CD4-positive, alpha-beta memory T cell (primary cell): ENCODE measurements at regions of chr21 and their contacts with region 1.

Region 1: GRCh38 chr21:34351786-34352241 is 12.0 kb upstream of the KCNE2 start:
- DNase-seq: peak in 2 of 5 donors; percentile 2 to 15
- H3K4me3 ChIP-seq: no peak overlapping the region
- H3K4me3 Mint-ChIP-seq: no peak overlapping the region
- H3K27ac ChIP-seq: no peak overlapping the region
- H3K27ac Mint-ChIP-seq: no peak overlapping the region
- H3K4me1 ChIP-seq: no peaks in the 10 kb centered on the region
- H3K4me1 Mint-ChIP-seq: peaks cover 4 to 6% (median 5%) of the 10 kb centered on the region in 4 donors
- H3K27me3 ChIP-seq: no peaks in the 10 kb centered on the region
- H3K27me3 Mint-ChIP-seq: peaks cover 19 to 20% of the 10 kb centered on the region in 2 donors

Region 2: DNA sequence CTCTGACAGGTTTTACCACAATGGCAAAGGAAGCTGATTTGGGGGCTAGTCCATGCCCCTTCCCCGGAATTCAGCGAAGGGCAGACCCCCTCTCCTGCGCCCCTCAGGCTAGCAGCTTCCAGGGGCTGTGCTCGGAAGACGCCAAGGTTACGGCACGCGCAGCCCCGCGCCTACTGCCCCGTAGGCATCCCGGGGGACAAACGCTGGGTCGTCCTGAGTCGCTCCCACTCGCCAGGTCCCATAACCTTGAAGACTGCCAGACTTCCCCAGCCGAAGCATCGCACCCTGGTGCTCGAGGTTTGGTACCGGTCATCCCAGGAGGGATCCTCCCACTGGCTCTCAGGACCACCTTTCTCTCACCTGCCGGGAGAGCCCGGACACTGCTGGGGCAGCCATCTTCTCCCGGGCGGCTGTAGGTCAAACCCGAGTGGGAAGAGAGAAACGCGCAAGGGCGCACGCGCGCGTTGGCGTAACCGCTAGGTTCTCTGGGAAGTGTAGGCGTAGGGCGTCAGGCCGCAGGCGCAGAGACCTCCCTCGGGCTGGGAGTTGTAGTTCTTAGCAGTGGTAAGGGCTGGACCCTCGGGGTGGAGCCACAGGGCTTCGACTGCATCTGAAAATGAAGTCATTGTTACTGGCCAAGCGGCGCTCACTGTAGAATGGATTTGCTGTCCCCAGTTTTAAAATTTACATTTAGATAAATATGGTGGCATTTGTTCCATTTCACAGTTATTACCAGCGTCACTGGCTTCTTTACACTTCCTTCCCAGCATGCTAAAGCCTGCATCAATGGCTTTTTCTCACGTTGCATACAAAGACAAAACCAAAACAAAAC is 436.2 kb before region 1 on chr21 and contains the start of gene ATP5PO:
- CTCF ChIA-PET with region 1: interaction called, 35 read pairs
- POLR2A ChIA-PET with region 1: interaction called, 5 read pairs
- intact Hi-C with region 1: no loop called
- DNase-seq: peak; percentile 94 to 96 (median 94)
- H3K4me3 ChIP-seq: peak within 1 kb of the TSS; percentile 90
- H3K4me3 Mint-ChIP-seq: peak within 1 kb of the TSS; percentile 97 to 99 (median 98)
- H3K27ac ChIP-seq: peak within 1 kb of the TSS; percentile 91
- H3K27ac Mint-ChIP-seq: peak within 1 kb of the TSS; percentile 92 to 99 (median 99)
- H3K4me1 ChIP-seq: peaks cover 35% of the 10 kb centered on the region
- H3K4me1 Mint-ChIP-seq: peaks cover 17 to 34% (median 28%) of the 10 kb centered on the region in 4 donors
- H3K27me3 ChIP-seq: no peaks in the 10 kb centered on the region
- H3K27me3 Mint-ChIP-seq: no peaks in the 10 kb centered on the region
- total RNA-seq, gene ATP5PO: 126 to 143 TPM

Region 3: GRCh38 chr21:33966324-33966949 is 385.4 kb before region 1 on chr21:
- CTCF ChIA-PET with region 1: interaction called, 10 read pairs
- POLR2A ChIA-PET with region 1: no interaction called
- intact Hi-C with region 1: no loop called
- DNase-seq: no peak
- H3K4me3 ChIP-seq: no peak overlapping the region
- H3K4me3 Mint-ChIP-seq: no peak overlapping the region
- H3K27ac ChIP-seq: no peak overlapping the region
- H3K27ac Mint-ChIP-seq: peak overlapping the region in 1 of 7 donors; percentile 41
- H3K4me1 ChIP-seq: no peaks in the 10 kb centered on the region
- H3K4me1 Mint-ChIP-seq: peaks cover 12 to 42% (median 24%) of the 10 kb centered on the region in 4 donors
- H3K27me3 ChIP-seq: no peaks in the 10 kb centered on the region
- H3K27me3 Mint-ChIP-seq: no peaks in the 10 kb centered on the region

Region 4: GRCh38 chr21:34333150-34333739 is 18.6 kb before region 1 on chr21:
- CTCF ChIA-PET with region 1: interaction called, 11 read pairs
- POLR2A ChIA-PET with region 1: no interaction called
- intact Hi-C with region 1: no loop called
- DNase-seq: no peak
- H3K4me3 ChIP-seq: no peak overlapping the region
- H3K4me3 Mint-ChIP-seq: no peak overlapping the region
- H3K27ac ChIP-seq: no peak overlapping the region
- H3K27ac Mint-ChIP-seq: no peak overlapping the region
- H3K4me1 ChIP-seq: no peaks in the 10 kb centered on the region
- H3K4me1 Mint-ChIP-seq: no peaks in the 10 kb centered on the region
- H3K27me3 ChIP-seq: no peaks in the 10 kb centered on the region
- H3K27me3 Mint-ChIP-seq: peaks cover 0 to 3% of the 10 kb centered on the region in 2 donors

Region 5: GRCh38 chr21:34367321-34367935 is 15.6 kb after region 1 on chr21:
- CTCF ChIA-PET with region 1: interaction called, 24 read pairs
- POLR2A ChIA-PET with region 1: no interaction called
- intact Hi-C with region 1: no loop called
- DNase-seq: peak; percentile 24 to 53 (median 34)
- H3K4me3 ChIP-seq: no peak overlapping the region
- H3K4me3 Mint-ChIP-seq: no peak overlapping the region
- H3K27ac ChIP-seq: no peak overlapping the region
- H3K27ac Mint-ChIP-seq: no peak overlapping the region
- H3K4me1 ChIP-seq: no peaks in the 10 kb centered on the region
- H3K4me1 Mint-ChIP-seq: no peaks in the 10 kb centered on the region
- H3K27me3 ChIP-seq: no peaks in the 10 kb centered on the region
- H3K27me3 Mint-ChIP-seq: peaks cover 6 to 11% of the 10 kb centered on the region in 2 donors